Mammary epithelial cell (primary cell): ENCODE measurements at regions of chr16 and their contacts with region 1.

Region 1: DNA sequence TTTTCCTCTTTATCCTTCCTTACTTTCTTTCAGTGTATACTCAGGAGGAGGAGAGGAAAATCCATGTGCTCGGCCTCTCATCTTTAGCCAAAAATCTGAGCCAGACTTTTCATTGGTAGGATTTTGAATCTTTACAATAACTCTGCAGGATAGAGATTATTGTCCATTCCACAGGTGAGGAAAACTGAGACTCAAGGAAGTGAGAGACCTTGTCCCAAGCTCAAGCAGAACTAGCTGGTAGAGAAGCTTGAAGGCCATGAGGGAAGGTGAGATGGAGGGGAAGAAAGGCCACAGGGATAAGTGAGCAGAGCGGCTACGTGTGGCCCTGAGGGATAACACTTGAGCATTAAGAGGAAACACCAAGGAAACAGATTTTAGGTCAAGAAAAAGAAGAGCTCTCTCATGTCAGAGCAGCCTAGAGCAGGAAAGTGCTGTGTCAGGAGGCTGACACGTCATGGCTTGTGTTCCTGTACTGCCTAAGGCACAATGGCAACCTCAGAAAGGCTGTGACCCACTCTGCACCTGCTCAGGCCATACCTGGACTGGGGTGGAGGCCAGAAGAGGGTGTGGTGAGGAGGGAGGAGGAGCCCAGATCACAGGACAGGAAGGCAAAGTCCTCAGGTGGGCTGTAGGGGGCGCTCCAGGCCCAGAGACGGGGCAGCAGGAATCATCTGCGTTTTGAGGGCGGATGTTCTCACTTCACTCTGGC is 11.9 kb downstream of the MT4 start:
- DNase-seq: peak; percentile 91
- H3K4me3 ChIP-seq: no peak overlapping the region
- H3K27ac ChIP-seq: no peak overlapping the region
- H3K4me1 ChIP-seq: peaks cover 4% of the 10 kb centered on the region
- H3K27me3 ChIP-seq: no peaks in the 10 kb centered on the region
- CTCF ChIP-seq: peak; percentile 96 to 97

Region 2: GRCh38 chr16:56513972-56514371 is 62.8 kb before region 1 on chr16:
- CTCF ChIA-PET with region 1: no interaction called
- dilution Hi-C with region 1: no loop called
- in situ Hi-C with region 1: no loop called
- intact Hi-C with region 1: loop called (anchors 1 kb)
- DNase-seq: peak; percentile 59
- H3K4me3 ChIP-seq: no peak overlapping the region
- H3K27ac ChIP-seq: no peak overlapping the region
- H3K4me1 ChIP-seq: peaks cover 33% of the 10 kb centered on the region
- H3K27me3 ChIP-seq: no peaks in the 10 kb centered on the region
- CTCF ChIP-seq: peak; percentile 79 to 80

Region 3: DNA sequence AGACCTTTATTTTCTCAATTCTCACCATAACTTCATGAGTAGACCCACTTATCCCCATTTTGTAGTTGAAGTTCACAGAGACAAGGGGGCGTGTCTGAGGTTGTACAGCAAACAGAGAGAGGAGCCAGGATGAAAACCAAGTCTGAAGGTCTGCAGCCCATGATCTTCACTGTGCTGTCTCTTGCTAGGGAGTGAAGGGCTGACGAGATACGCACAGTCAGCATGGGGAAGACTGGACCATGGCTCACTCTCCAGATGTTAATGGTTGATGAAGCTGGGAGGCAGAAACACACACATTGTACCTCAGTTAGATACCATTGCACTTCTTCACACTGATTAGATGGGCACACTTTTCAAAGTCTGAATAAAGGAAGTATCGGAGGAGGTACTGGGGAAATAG is 17.6 kb before region 1 on chr16:
- CTCF ChIA-PET with region 1: no interaction called
- dilution Hi-C with region 1: no loop called
- in situ Hi-C with region 1: no loop called
- intact Hi-C with region 1: no loop called
- DNase-seq: no peak
- H3K4me3 ChIP-seq: no peak overlapping the region
- H3K27ac ChIP-seq: no peak overlapping the region
- H3K4me1 ChIP-seq: peaks cover 21% of the 10 kb centered on the region
- H3K27me3 ChIP-seq: no peaks in the 10 kb centered on the region
- CTCF ChIP-seq: no peak

Region 4: GRCh38 chr16:56600398-56600999 is 23.8 kb after region 1 on chr16:
- CTCF ChIA-PET with region 1: interaction called, 9 read pairs
- dilution Hi-C with region 1: no loop called
- in situ Hi-C with region 1: no loop called
- intact Hi-C with region 1: loop called (anchors 1 kb)
- DNase-seq: peak; percentile 48
- H3K4me3 ChIP-seq: no peak overlapping the region
- H3K27ac ChIP-seq: no peak overlapping the region
- H3K4me1 ChIP-seq: peaks cover 6% of the 10 kb centered on the region
- H3K27me3 ChIP-seq: no peaks in the 10 kb centered on the region
- CTCF ChIP-seq: peak; percentile 75 to 79

Region 5: GRCh38 chr16:56691885-56692284 is 115.1 kb after region 1 on chr16:
- CTCF ChIA-PET with region 1: no interaction called
- dilution Hi-C with region 1: no loop called
- in situ Hi-C with region 1: no loop called
- intact Hi-C with region 1: loop called (anchors 2 kb)
- DNase-seq: peak; percentile 98
- H3K4me3 ChIP-seq: no peak overlapping the region
- H3K27ac ChIP-seq: peak overlapping the region; percentile 18
- H3K4me1 ChIP-seq: peaks cover 24% of the 10 kb centered on the region
- H3K27me3 ChIP-seq: no peaks in the 10 kb centered on the region
- CTCF ChIP-seq: no peak

Region 6: GRCh38 chr16:56700195-56700594 is 123.5 kb after region 1 on chr16:
- CTCF ChIA-PET with region 1: interaction called, 13 read pairs
- dilution Hi-C with region 1: loop called (anchors 5 kb)
- in situ Hi-C with region 1: loop called in 1 of 2 experiments (anchors 10 kb)
- intact Hi-C with region 1: loop called (anchors 1 kb)
- DNase-seq: no peak
- H3K4me3 ChIP-seq: no peak overlapping the region
- H3K27ac ChIP-seq: no peak overlapping the region
- H3K4me1 ChIP-seq: peaks cover 6% of the 10 kb centered on the region
- H3K27me3 ChIP-seq: no peaks in the 10 kb centered on the region
- CTCF ChIP-seq: no peak

Region 7: DNA sequence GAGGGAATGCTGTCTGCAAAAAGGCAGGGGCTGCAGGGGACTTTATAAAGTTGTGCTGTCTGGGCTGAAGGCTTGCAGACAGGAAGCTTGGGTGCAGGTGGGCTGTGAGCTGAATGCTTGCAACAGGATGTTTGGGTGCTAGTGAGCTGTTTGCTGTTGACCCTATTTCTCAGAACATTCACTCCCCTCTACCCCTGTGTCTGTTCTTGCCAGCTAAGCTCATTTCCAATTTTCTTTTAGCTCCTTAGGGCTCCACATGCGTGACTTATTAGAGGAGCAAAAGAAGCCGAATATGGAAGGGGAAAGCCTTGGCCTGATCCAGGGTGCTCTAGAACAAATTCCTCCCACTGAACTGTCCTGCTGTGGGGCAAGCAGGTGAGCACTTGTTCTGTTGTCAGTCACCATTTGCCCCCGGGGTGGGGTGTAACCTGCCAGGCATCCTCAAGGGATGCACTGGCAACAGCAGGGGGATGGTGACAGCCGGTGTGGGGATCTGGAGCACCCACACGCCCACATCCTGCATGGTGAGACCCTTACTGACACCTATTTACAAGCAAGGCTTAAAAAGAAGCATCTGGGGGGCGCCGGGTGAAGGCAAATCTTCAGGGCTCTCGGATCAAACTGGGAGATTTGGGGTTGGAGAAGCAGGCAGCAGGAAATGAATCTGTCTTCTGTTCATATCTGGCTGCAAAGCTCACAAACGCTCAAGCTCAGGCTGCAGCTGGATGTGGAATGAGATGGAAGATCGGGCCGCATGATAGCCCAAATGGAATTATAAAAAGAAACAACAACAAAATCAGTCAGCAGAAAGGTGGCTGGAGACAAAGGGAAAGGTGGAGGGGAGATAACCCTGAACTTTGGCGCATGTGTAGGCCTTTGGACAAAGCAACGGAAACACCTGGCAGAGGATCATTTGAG is 132.0 kb after region 1 on chr16:
- CTCF ChIA-PET with region 1: no interaction called
- dilution Hi-C with region 1: loop called (anchors 5 kb)
- in situ Hi-C with region 1: loop called in 1 of 2 experiments (anchors 10 kb)
- intact Hi-C with region 1: no loop called
- DNase-seq: no peak
- H3K4me3 ChIP-seq: no peak overlapping the region
- H3K27ac ChIP-seq: no peak overlapping the region
- H3K4me1 ChIP-seq: peaks cover 3% of the 10 kb centered on the region
- H3K27me3 ChIP-seq: no peaks in the 10 kb centered on the region
- CTCF ChIP-seq: no peak

Region 8: DNA sequence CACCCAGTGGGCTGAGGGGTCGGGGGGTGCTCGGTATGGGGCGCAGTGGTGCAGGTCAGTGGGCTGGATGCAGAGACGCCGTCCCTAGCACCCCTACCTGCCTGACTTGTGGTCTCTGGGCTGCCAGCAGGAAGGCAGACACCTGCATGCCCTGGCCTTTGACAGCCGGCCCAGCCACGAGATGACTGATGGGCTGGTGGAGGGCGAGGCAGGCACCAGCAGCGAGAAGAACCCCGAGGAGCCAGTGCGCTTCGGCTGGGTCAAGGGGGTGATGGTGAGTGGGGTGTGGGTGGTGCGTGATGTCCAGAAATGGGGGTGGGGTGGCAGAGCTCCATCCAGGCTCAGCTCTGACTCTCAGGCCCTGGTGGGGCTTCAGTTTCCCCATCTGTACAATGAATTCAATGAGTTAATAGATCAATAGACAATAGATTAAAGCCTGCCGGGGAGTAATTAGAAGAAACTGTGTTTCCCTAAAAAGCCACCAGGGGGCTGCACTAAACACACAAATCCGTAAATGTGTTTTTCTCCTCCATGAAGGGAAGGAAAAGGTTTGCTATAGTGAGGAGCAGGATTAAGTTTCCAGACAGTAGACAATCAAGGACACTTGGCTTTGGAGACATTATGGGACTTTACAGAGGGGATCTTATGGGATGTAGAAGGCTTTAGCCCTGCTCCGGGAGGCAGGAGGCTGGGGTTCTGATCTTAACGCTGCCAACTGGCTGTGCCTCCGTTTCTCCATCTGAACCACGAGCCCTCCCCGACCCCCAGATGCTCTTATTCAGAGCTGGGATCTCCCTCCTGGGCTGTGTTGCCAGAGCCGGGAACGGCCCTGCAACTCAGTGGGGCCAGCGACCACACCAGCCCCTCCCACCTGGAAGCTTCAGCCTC is 290.4 kb after region 1 on chr16:
- CTCF ChIA-PET with region 1: no interaction called
- dilution Hi-C with region 1: no loop called
- in situ Hi-C with region 1: no loop called
- intact Hi-C with region 1: loop called (anchors 5 kb)
- DNase-seq: peak; percentile 19
- H3K4me3 ChIP-seq: no peak overlapping the region
- H3K27ac ChIP-seq: no peak overlapping the region
- H3K4me1 ChIP-seq: no peaks in the 10 kb centered on the region
- H3K27me3 ChIP-seq: no peaks in the 10 kb centered on the region
- CTCF ChIP-seq: peak; percentile 63 to 72